ENCODE measurements at regions of chr3 and their contacts with region 1.

Region 1: GRCh38 chr3:122564155-122564912 is at the starts of genes DTX3L and PARP9:
- DNase-seq: peak; percentile 88
- H3K4me3 Mint-ChIP-seq: peak within 1 kb of the TSS; percentile 92
- H3K27ac Mint-ChIP-seq: peak within 1 kb of the TSS; percentile 97
- H3K4me1 Mint-ChIP-seq: peaks cover 67% of the 10 kb centered on the region
- H3K27me3 Mint-ChIP-seq: no peaks in the 10 kb centered on the region
- total RNA-seq, gene DTX3L: 39.6 to 40.8 TPM
- total RNA-seq, gene PARP9: 38.1 to 38.4 TPM

Region 2: DNA sequence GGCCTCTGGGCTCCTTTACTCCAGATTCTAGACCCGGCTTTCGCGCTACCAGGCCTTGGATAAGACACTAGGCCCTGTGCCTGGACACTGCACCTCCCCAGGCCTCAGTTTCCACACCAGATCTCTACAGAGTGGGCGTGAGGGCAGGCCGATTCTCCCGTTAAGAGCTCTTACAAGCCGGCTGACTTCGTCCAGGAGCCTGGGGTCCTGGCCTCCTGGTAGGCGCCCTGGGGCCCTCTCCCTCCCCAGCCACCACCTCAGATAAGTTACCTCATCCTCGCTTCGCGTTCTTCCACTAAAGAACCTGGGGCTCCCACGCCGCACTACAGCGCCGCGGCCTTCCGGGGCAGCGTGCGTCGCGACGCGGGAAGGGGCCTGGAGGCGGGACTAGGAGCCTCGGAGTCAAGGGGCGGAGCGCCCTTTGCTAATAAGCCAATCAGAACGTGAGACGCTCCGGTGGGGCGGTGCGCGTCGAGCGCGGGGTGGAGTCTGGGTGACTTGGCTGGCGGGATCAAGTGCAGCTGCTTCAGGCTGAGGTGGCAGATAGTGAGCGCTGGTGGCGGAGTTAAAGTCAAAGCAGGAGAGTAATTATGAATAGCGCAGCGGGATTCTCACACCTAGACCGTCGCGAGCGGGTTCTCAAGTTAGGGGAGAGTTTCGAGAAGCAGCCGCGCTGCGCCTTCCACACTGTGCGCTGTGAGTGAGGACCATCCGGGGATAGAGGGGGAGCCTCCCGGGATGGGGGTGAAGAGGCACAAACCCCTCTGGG is 729.5 kb before region 1 on chr3 and contains the starts of genes EAF2 and IQCB1:
- CTCF ChIA-PET with region 1: no interaction called
- POLR2A ChIA-PET with region 1: no interaction called
- intact Hi-C with region 1: loop called (anchors 10 kb)
- DNase-seq: peak; percentile 98
- H3K4me3 Mint-ChIP-seq: peak within 1 kb of the TSS; percentile 98
- H3K27ac Mint-ChIP-seq: peak within 1 kb of the TSS; percentile 84
- H3K4me1 Mint-ChIP-seq: peaks cover 37% of the 10 kb centered on the region
- H3K27me3 Mint-ChIP-seq: no peaks in the 10 kb centered on the region
- total RNA-seq, gene EAF2: 14.4 to 14.8 TPM
- total RNA-seq, gene IQCB1: 36.8 to 37.3 TPM

Region 3: GRCh38 chr3:122514123-122515019 is 50.0 kb before region 1 on chr3 and contains the start of gene KPNA1:
- CTCF ChIA-PET with region 1: interaction called, 3 read pairs
- POLR2A ChIA-PET with region 1: interaction called, 3 read pairs
- intact Hi-C with region 1: loop called (anchors 2 kb)
- DNase-seq: peak; percentile 91
- H3K4me3 Mint-ChIP-seq: peak within 1 kb of the TSS; percentile 77
- H3K27ac Mint-ChIP-seq: peak within 1 kb of the TSS; percentile 85
- H3K4me1 Mint-ChIP-seq: peaks cover 39% of the 10 kb centered on the region
- H3K27me3 Mint-ChIP-seq: no peaks in the 10 kb centered on the region
- total RNA-seq, gene KPNA1: 43.4 to 46.0 TPM

Region 4: DNA sequence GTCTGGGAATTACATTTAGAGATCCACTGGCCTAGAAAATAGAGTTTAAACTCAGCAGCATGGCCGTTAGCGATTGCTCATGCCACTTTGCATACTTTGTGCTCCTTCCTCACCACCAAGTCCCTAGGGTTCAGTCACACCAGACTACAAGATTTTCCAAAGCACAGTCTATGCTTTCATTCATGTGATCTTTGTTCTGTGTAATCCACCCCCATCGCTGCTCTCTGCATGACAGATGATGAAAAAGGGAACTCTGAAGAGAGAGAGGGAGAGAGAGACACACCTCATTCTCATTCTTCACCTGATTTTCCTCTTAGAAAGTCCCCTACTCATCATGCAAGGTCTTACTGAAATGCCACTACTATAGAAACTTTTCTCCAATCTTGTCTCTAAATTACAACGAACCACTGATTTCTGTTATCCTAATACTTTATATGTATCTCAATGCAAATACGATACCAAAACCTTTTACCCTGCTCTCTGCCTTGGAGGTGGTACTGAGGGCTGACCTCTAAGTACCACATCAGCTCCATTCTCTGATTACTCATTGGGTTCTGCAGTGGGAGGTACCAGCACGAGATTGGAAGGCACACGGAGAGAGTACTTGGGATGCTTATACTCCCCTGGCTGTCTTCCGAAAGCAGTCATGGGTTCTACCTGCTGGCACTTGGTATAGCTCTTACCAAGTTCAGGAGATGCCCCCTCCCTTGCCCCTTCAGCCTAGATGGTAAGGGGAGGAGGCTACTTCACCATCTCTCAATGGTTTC is 12.0 kb after region 1 on chr3:
- CTCF ChIA-PET with region 1: interaction called, 8 read pairs
- POLR2A ChIA-PET with region 1: interaction called, 12 read pairs
- intact Hi-C with region 1: loop called (anchors 1 kb)
- DNase-seq: peak; percentile 70
- H3K4me3 Mint-ChIP-seq: peak overlapping the region; percentile 35
- H3K27ac Mint-ChIP-seq: peak overlapping the region; percentile 82
- H3K4me1 Mint-ChIP-seq: peaks cover 61% of the 10 kb centered on the region
- H3K27me3 Mint-ChIP-seq: no peaks in the 10 kb centered on the region

Region 5: DNA sequence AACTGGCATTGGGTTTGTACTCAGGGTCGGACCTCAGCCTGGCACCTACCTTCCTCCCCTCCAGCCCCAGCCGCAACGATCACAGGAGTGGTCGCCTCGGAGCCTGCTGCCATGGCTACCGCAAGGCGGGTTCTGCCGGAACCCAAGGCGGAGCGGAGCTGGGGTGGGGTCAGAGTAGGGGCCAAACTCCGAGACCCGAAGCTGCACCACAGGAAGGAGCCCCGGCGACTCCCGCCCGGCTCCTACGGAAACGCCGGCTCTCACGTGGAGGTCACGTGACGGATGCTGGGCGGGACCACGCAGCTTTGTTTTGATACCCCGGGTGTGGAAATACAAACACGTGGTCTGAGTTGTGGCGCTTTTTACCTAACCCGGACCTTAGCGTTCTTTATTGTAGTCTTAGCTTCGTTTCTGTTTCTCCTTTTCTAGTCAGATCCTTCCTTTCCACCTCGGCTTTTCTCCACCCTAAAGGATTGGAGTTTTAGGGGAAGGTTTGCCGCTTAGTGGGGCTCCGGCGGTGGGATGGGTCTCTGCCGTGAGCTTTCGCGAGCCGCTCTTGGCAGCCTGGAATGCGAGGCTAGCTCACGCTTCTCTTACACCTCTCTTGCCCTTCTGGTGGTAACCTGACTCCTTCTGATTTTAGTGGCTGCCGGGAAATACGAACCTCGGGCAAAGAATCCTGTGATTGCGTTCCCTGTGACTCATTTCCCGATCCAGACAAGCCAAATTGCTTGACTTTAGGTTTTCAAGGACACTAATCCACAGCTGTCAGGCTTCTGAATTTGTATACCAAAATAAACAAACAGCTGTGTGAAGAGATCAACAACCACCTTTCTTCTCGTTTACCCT is 229.5 kb after region 1 on chr3 and contains the start of gene HSPBAP1:
- CTCF ChIA-PET with region 1: interaction called, 3 read pairs
- POLR2A ChIA-PET with region 1: no interaction called
- intact Hi-C with region 1: loop called (anchors 5 kb)
- DNase-seq: peak; percentile 93
- H3K4me3 Mint-ChIP-seq: peak within 1 kb of the TSS; percentile 85
- H3K27ac Mint-ChIP-seq: peak within 1 kb of the TSS; percentile 82
- H3K4me1 Mint-ChIP-seq: peaks cover 29% of the 10 kb centered on the region
- H3K27me3 Mint-ChIP-seq: no peaks in the 10 kb centered on the region
- total RNA-seq, gene HSPBAP1: 4.8 TPM

Measured in activated CD4-positive, alpha-beta memory T cell treated with anti-CD3 and anti-CD28 coated beads for 36 hours (primary cell).